Activated CD8-positive, alpha-beta T cell treated with anti-CD3 and anti-CD28 coated beads for 36 hours (primary cell): ENCODE measurements at regions of chr12 and their contacts with region 1.

Region 1: GRCh38 chr12:95942524-95943329 is at the start of gene CCDC38:
- DNase-seq: peak; percentile 90
- ATAC-seq: peak; percentile 97
- H3K4me3 Mint-ChIP-seq: peak within 1 kb of the TSS; percentile 85
- H3K27ac Mint-ChIP-seq: peak within 1 kb of the TSS; percentile 91
- H3K4me1 Mint-ChIP-seq: peaks cover 9% of the 10 kb centered on the region
- H3K27me3 Mint-ChIP-seq: no peaks in the 10 kb centered on the region
- CTCF ChIP-seq: no peak
- total RNA-seq, gene CCDC38: 0.18 to 0.34 TPM

Region 2: GRCh38 chr12:95858479-95859343 is 84.0 kb before region 1 on chr12 and contains the start of gene SNRPF:
- CTCF ChIA-PET with region 1: no interaction called
- POLR2A ChIA-PET with region 1: interaction called, 10 read pairs
- intact Hi-C with region 1: no loop called
- DNase-seq: peak; percentile 96
- ATAC-seq: peak; percentile 96
- H3K4me3 Mint-ChIP-seq: no peak within 1 kb of the TSS
- H3K27ac Mint-ChIP-seq: no peak within 1 kb of the TSS
- H3K4me1 Mint-ChIP-seq: peaks cover 31% of the 10 kb centered on the region
- H3K27me3 Mint-ChIP-seq: peaks cover 3% of the 10 kb centered on the region
- CTCF ChIP-seq: no peak
- total RNA-seq, gene SNRPF: 51.2 to 54.4 TPM

Region 3: GRCh38 chr12:95918194-95918993 is 24.3 kb before region 1 on chr12:
- CTCF ChIA-PET with region 1: interaction called, 44 read pairs
- POLR2A ChIA-PET with region 1: interaction called, 3 read pairs
- intact Hi-C with region 1: no loop called
- DNase-seq: peak; percentile 62
- ATAC-seq: peak; percentile 99
- H3K4me3 Mint-ChIP-seq: no peak overlapping the region
- H3K27ac Mint-ChIP-seq: no peak overlapping the region
- H3K4me1 Mint-ChIP-seq: no peaks in the 10 kb centered on the region
- H3K27me3 Mint-ChIP-seq: peaks cover 2% of the 10 kb centered on the region
- CTCF ChIP-seq: peak; percentile 95

Region 4: DNA sequence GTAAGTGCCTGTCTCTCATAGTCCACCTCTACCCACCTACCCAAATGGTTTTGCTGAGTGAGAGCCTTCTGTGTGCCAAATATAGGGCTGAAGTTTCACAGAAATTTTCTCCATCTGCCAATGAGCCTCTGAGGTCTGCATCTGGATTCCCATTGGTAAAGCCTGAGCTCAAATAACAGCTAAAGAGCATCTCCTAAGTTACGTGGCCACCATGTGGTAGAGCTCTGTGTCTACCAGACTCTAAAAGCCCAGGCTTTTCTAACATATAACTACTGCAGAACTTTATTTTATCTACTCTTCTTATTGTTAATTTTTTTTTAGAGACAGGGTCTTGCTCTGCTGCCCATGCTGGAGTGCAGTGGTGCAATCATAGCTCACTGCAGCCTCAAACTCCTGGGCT is 16.4 kb after region 1 on chr12:
- CTCF ChIA-PET with region 1: interaction called, 27 read pairs
- POLR2A ChIA-PET with region 1: interaction called, 16 read pairs
- intact Hi-C with region 1: no loop called
- DNase-seq: no peak
- ATAC-seq: no peak
- H3K4me3 Mint-ChIP-seq: no peak overlapping the region
- H3K27ac Mint-ChIP-seq: no peak overlapping the region
- H3K4me1 Mint-ChIP-seq: no peaks in the 10 kb centered on the region
- H3K27me3 Mint-ChIP-seq: no peaks in the 10 kb centered on the region
- CTCF ChIP-seq: no peak

Region 5: DNA sequence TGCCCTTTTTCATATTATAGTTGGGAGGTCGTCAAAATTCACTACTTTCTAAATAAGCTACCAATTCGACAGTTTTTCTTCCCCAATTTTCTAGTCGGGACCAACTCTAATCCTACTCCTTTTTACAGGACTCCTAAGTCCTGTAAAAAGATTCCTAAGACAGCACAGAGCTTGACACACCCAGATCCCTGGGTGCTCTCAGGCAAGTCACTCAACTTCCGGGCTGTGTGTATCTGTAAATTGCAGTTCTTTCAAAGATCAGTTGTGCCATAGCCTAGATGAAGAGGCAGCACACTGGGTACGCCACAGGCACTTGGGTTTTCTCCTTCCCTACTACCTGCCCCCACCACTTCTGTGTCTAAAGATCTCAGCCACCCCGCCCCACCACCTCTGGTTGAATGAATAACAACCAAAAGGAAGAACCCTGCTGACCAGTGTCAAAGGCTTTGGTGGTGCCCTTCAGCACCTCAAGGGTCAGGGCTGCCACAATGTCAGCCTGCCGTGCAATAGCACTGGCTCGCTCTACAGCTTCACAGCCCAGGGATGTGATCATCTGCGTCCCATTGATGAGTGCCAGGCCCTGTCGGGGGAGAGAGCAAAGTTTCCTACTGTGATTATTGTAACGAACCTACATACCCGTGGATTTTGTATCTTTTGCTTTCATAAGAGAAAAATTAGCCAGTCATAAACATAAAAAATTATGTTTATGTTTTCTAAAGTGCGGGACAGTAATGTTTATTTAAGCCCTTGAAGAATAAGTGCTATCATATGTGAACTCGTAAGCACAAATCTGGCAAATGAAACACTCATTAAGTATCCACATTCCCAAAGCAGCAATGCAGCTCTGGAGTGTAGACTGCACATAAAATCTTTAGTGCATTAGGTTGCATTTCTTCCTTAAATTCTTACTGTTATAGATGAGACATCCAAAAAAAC is 44.2 kb after region 1 on chr12:
- CTCF ChIA-PET with region 1: no interaction called
- POLR2A ChIA-PET with region 1: no interaction called
- intact Hi-C with region 1: no loop called
- DNase-seq: no peak
- ATAC-seq: no peak
- H3K4me3 Mint-ChIP-seq: no peak overlapping the region
- H3K27ac Mint-ChIP-seq: no peak overlapping the region
- H3K4me1 Mint-ChIP-seq: no peaks in the 10 kb centered on the region
- H3K27me3 Mint-ChIP-seq: no peaks in the 10 kb centered on the region
- CTCF ChIP-seq: no peak